IMR-90 (cell line): ENCODE measurements at regions of chr1 and their contacts with region 1.

Region 1: DNA sequence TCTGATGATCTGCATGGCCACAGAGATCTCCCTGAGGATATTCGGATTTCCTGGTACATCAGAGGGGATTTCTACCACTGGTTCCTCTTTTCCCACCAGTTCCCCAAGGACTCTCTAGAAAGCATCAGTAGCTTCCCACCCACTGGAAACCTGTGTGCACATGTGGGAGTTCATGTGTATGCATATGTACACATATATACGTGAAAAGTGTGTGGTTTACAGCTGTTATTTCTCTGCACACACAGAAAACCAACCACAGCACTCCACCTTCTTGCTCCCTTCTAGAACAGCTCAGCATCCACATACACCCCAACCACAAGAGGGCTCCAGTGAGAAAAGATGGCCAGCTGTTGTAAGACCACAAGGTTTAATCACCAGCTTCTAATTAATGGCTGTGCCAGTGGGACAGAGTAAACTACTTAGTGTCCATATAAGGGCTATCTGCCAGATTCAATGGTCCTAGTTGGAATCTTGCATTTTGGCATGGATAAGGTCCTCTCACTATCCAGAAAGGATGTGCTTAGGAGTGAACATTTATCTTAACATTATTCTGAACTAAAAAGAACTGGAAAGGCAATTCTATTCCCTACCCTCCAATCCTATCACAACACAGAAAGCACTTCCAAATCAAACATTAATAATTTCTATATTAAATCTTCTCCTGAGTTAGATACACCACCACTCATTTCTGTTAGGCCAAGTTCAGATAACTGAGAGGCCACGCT is 24.1 kb downstream of the GPR3 start:
- DNase-seq: peak; percentile 73
- ATAC-seq: peak; percentile 55
- H3K4me3 ChIP-seq: no peak overlapping the region
- H3K27ac ChIP-seq: no peak overlapping the region
- H3K4me1 ChIP-seq: peaks cover 11% of the 10 kb centered on the region
- H3K27me3 ChIP-seq: no peaks in the 10 kb centered on the region
- CTCF ChIP-seq: peak; percentile 65
- POLR2A ChIP-seq: no peak; the same call in 1 of the 2 replicates
- RAD21 ChIP-seq: peak; percentile 67

Region 2: DNA sequence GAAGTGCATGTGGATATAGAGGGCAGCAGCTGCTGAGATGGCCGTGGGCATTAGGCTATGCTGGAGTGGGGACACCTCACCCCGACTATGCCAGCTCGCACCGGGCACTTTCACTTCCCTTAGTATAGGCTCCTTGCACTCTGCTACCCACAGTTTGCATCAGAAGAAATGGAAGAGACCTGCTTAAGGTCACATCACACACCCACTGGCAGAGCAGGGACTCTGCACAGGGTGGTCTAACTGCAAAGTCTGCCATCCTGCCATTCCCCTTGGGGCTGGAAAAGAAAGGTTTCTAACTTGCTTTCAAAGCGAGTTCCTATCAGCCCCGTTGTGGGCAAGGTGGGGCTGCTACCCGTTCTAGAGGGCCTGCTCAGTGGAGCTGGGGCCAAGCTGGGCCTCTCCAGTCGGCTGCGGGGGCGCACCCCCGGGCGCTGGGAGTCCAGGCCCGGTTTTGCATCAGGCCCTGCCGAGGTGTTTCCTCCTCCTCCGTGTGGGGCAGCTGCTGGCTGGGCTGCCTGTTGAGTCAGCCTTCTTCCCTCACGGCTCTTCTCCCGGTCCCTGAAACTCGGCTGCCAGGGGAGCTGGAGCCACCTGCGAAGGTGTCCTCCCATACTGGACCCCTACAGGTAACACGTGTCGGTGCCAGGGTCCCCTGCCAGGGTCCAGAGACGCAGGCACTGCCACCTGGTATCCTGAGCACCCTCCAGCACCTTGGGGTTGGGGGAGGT is 74.9 kb before region 1 on chr1 and contains the start of gene SYTL1:
- CTCF ChIA-PET with region 1: no interaction called
- POLR2A ChIA-PET with region 1: no interaction called
- dilution Hi-C with region 1: no loop called
- in situ Hi-C with region 1: no loop called
- intact Hi-C with region 1: no loop called
- DNase-seq: peak; percentile 67
- ATAC-seq: peak; percentile 92
- H3K4me3 ChIP-seq: no peak within 1 kb of the TSS
- H3K27ac ChIP-seq: no peak within 1 kb of the TSS
- H3K4me1 ChIP-seq: peaks cover 14% of the 10 kb centered on the region
- H3K27me3 ChIP-seq: no peaks in the 10 kb centered on the region
- CTCF ChIP-seq: no peak
- POLR2A ChIP-seq: no peak
- RAD21 ChIP-seq: no peak
- total RNA-seq, gene SYTL1: 0.18 and 0.28 TPM in 2 replicates

Region 3: GRCh38 chr1:27489910-27490741 is 73.6 kb after region 1 on chr1 and contains the start of gene WASF2:
- CTCF ChIA-PET with region 1: no interaction called
- POLR2A ChIA-PET with region 1: no interaction called
- dilution Hi-C with region 1: no loop called
- in situ Hi-C with region 1: no loop called
- intact Hi-C with region 1: loop called (anchors 2 kb)
- DNase-seq: peak; percentile 96
- ATAC-seq: peak; percentile 97
- H3K4me3 ChIP-seq: peak within 1 kb of the TSS; percentile 79
- H3K27ac ChIP-seq: peak within 1 kb of the TSS; percentile 90
- H3K4me1 ChIP-seq: peaks cover 6% of the 10 kb centered on the region
- H3K27me3 ChIP-seq: no peaks in the 10 kb centered on the region
- CTCF ChIP-seq: 0 out of 2 replicates have a peak, but pooled peaks have one; percentile 1
- POLR2A ChIP-seq: peak; percentile 86
- RAD21 ChIP-seq: no peak
- total RNA-seq, gene WASF2: 7.5 and 7.9 TPM in 2 replicates

Region 4: GRCh38 chr1:27525296-27526272 is 109.0 kb after region 1 on chr1:
- CTCF ChIA-PET with region 1: no interaction called
- POLR2A ChIA-PET with region 1: no interaction called
- dilution Hi-C with region 1: no loop called
- in situ Hi-C with region 1: no loop called
- intact Hi-C with region 1: loop called (anchors 1 kb)
- DNase-seq: peak; percentile 53
- ATAC-seq: peak; percentile 75
- H3K4me3 ChIP-seq: no peak overlapping the region
- H3K27ac ChIP-seq: peak overlapping the region; percentile 55; the same call in 1 of the 2 replicates
- H3K4me1 ChIP-seq: peaks cover 42% of the 10 kb centered on the region
- H3K27me3 ChIP-seq: no peaks in the 10 kb centered on the region
- CTCF ChIP-seq: no peak
- POLR2A ChIP-seq: no peak
- RAD21 ChIP-seq: no peak